ENCODE measurements at regions of chr6 and their contacts with region 1.

Region 1: DNA sequence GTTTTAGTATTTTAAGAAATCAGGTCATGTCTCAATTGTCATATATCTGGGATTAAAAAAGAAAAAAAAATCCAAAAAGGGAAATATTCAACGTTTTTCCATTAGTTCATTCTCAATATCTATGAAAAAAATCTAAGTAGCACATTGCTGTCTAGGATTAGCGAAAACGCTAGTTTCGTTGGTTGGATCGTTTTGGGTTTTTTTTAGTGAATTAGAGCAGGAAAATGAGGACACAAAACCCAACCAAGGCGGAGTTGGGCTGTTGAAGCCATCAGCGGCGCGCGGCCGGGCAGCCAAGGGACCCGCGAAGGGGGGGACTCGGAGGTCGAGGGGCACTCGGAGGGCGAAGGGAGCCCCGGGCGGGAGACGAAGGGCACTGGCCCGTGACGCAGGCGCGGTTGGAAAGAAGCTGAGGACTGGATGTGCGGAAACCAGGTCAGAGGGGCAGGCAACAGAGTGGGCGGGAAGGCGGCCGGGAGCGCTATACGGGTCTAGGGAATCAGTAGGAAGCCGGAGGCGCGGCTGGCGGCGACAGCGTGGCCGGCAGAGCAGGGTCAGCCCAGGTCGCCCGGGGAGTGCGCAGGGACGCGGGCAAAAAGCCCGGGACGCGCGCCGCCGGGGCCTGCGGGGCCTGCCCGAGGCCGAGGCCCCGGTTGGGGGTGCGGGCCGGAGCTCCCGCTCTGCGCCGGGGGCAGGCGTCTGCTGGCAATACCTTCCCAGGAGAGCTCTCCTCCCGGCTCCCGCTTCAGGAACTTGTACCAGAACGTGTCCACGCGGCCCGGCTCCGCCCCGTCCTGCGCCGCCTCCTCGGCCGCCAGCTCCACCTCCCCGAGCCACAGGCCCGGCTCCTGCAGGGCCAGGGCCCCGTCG is 599 bp downstream of the EPM2A start:
- DNase-seq: peak; percentile 92
- H3K4me3 ChIP-seq: peak overlapping the region; percentile 72 to 77
- H3K27ac ChIP-seq: peak overlapping the region; percentile 98
- H3K4me1 ChIP-seq: peaks cover 6 to 17% of the 10 kb centered on the region in 2 experiments; a peak in 3 of 4 replicates
- H3K27me3 ChIP-seq: no peaks in the 10 kb centered on the region
- CTCF ChIP-seq: no peak
- EP300 ChIP-seq: peak in 1 of 2 experiments; percentile 61; a peak in 2 of 4 replicates
- RAD21 ChIP-seq: no peak

Region 2: DNA sequence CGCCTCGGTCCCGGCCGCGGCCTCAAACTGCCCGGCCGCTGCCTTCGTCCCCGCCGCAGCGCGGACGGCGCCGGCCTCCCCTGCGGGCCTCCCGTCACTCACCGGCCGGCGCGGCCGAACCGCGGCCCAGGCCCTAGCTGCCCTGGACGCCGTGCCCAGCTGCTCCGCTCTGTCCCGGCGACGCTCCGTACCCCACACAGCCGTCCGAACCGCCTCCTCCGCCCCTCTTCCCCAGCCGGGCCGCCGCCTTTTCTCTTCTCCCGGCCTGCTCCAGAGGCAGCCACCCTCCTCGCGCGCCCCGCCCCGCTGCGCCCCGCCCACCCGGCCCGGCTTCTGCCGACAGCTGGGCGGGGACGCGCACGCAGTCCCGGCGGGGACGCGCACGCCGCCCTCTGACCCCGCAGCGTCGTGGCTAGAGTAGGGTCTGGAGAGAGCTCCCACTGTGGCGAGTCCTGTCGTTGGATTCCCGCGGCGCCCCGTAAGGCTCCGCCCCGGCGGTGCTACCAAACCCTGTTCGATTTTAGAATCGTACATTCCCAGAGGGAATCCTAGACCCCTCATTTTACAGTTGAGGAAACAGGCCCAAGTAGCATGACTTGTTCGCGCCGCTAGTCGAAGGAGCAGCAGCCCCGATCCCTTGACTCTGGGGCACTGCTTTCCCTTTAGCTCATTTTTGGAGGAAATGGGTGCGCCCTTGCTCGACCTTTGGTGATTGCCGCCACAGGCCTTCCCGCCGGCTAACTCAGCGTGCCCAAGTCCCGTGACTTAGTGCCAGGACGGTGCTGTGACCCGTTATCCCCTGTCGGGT is 80.0 kb after region 1 on chr6 and contains the start of gene FBXO30:
- CTCF ChIA-PET with region 1: interaction called, 6 read pairs
- POLR2A ChIA-PET with region 1: interaction called, 57 read pairs
- DNase-seq: peak; percentile 95
- H3K4me3 ChIP-seq: peak within 1 kb of the TSS; percentile 82 to 88
- H3K27ac ChIP-seq: peak within 1 kb of the TSS; percentile 83 to 97
- H3K4me1 ChIP-seq: peaks cover 8 to 18% of the 10 kb centered on the region in 2 experiments; a peak in 3 of 4 replicates
- H3K27me3 ChIP-seq: no peaks in the 10 kb centered on the region
- CTCF ChIP-seq: no peak
- EP300 ChIP-seq: no peak
- RAD21 ChIP-seq: no peak
- polyA plus RNA-seq, gene FBXO30: 1.7 and 2.4 TPM in 2 replicates

Region 3: DNA sequence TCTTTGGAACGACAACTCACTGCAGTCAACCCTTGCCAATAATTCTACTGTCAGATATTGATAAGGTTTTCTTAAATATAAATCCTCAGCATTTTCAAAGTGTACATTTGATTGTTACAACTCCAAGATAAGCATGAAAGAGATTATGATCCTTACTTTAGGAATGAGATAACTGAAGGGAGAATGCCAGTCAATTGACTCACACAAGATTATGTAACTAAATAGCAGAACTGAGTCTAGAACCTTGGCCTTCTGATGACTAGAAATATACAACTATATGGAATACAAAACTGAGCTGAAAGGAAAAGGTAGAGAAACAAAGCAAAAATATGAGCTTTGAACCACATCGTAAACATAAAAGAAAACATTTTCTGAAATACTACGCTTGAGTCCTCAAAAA is 1442.6 kb after region 1 on chr6:
- CTCF ChIA-PET with region 1: no interaction called
- POLR2A ChIA-PET with region 1: no interaction called
- DNase-seq: no peak
- H3K4me3 ChIP-seq: no peak overlapping the region
- H3K27ac ChIP-seq: no peak overlapping the region
- H3K4me1 ChIP-seq: peaks cover 0 to 3% of the 10 kb centered on the region in 2 experiments; a peak in 2 of 4 replicates
- H3K27me3 ChIP-seq: no peaks in the 10 kb centered on the region
- CTCF ChIP-seq: no peak
- EP300 ChIP-seq: no peak
- RAD21 ChIP-seq: no peak